CD4-positive, alpha-beta memory T cell (primary cell): ENCODE measurements at regions of chr6 and their contacts with region 1.

Region 1: DNA sequence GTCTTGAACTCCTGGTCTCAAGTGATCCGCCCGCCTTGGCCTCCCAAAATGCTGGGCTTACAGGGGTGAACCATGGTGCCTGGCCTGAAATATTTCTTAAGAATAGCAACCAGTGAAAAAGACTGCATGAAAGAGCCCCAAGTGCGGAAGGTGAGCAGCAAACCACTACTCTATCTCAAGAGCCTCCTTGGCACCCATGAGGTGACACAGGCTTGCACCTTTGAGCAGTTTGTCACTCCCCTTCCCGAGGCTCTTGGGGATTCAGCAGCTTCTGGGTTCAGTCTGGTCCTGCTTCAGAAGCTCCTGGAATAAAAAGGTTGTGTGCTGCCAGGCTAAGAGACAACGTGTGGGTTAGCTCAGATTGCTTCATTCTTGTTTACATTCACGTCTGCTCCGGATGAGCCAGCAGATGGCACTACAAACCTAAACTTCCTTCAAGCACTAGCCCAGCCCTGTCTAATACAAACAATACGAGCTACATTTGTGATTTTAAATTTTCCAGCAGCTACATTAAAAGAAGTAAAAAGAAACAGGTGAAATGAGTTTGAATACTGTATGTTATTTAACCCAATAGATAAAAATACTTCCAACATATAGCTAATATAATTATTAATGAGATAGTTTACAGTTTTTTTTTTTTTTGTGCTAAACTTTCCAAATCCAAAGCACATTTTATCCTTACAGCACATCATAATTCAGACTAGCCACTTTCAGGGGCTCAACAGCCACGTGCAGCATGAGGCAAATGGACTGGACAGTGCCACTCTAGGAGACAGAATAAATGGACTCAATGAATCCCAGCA is 46.2 kb downstream of the GJA10 start:
- DNase-seq: peak; percentile 70 to 78 (median 71)
- H3K4me3 ChIP-seq: no peak overlapping the region
- H3K4me3 Mint-ChIP-seq: no peak overlapping the region
- H3K27ac ChIP-seq: no peak overlapping the region
- H3K27ac Mint-ChIP-seq: peak overlapping the region in 6 of 7 donors; percentile 5 to 67 (median 40)
- H3K4me1 ChIP-seq: peaks cover 7% of the 10 kb centered on the region
- H3K4me1 Mint-ChIP-seq: peaks cover 10 to 30% (median 17%) of the 10 kb centered on the region in 4 donors
- H3K27me3 ChIP-seq: no peaks in the 10 kb centered on the region
- H3K27me3 Mint-ChIP-seq: no peaks in the 10 kb centered on the region

Region 2: DNA sequence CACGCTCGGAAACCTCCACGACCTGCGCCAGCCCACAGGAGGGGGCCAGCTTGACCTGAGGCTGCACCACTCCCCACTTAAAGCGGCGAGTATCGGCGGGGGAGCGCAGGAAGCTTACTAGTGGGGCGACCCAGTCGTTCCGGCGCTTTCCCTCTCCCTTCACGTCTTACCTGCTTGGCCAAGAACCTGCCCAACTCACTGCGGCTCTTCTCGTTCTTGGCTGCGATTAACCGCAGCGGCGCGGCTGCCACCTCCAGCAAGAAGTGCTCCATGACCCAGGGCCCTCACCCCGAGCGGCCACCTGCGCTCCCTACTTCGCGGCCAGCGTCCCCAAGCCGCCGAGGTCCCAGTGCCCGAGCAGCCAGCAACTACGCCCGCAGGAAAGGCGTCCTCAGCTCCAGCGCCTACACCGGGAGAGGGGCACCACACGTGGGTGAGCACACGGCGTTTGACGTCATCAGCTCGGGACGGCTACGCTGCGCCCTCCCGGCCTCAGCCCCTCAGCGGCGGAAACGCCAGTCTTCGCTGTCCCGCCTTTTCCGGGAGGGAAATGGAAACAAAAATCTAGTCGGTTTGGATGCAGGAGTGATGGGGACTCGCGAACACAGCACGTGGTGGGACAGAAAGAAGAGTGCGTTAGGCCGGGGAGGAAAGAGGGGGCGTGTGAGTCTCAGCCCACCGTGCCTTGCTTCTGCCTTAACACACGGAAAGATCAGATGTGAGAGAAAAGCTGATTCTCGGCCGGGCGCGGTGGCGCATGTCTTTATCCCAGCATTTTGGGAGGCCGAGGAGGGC is 120.9 kb before region 1 on chr6 and contains the start of gene MDN1:
- CTCF ChIA-PET with region 1: interaction called, 9 read pairs
- POLR2A ChIA-PET with region 1: interaction called, 7 read pairs
- intact Hi-C with region 1: loop called (anchors 10 kb)
- DNase-seq: peak; percentile 87 to 91 (median 89)
- H3K4me3 ChIP-seq: peak within 1 kb of the TSS; percentile 97
- H3K4me3 Mint-ChIP-seq: peak within 1 kb of the TSS; percentile 92 to 100 (median 96)
- H3K27ac ChIP-seq: peak within 1 kb of the TSS; percentile 62
- H3K27ac Mint-ChIP-seq: peak within 1 kb of the TSS; percentile 91 to 100 (median 96)
- H3K4me1 ChIP-seq: peaks cover 34% of the 10 kb centered on the region
- H3K4me1 Mint-ChIP-seq: peaks cover 21 to 44% (median 31%) of the 10 kb centered on the region in 4 donors
- H3K27me3 ChIP-seq: no peaks in the 10 kb centered on the region
- H3K27me3 Mint-ChIP-seq: no peaks in the 10 kb centered on the region
- total RNA-seq, gene MDN1: 62.0 to 72.2 TPM

Region 3: DNA sequence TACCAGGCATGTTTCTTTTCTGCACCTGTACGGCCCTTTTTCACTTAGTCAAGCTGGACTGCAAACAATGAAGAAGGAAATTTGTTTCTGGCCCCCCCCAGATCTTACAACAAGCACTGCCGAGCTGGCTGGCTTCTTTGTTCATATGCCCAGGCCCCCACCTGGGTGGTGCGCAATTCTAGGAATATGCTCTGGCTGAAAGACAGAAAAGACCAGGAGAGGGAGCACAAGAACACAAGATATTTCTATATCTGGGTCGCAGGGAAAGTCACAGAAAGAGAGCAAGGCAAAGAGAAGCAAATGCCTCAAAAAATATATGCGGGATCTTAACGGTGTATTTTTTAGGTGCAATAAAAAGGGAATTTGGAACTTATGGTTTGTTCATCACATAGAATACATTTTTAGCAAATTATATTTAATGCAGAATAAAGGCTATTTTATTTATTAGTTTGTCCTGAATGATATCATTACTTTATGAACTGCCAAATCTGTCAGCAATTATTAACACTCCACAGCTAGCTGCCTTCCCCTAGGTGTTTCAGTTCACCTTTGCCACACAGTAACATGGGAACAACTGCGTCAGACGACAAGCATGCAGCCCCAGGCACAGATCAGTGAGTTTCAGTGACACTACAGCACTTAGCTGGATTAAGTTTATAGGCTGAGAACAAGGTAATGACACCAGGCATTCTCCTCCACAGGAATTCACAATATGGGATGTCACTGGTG is 30.3 kb after region 1 on chr6:
- CTCF ChIA-PET with region 1: interaction called, 19 read pairs
- POLR2A ChIA-PET with region 1: no interaction called
- intact Hi-C with region 1: no loop called
- DNase-seq: peak in 4 of 5 donors; percentile 23 to 40 (median 33)
- H3K4me3 ChIP-seq: no peak overlapping the region
- H3K4me3 Mint-ChIP-seq: no peak overlapping the region
- H3K27ac ChIP-seq: no peak overlapping the region
- H3K27ac Mint-ChIP-seq: no peak overlapping the region
- H3K4me1 ChIP-seq: no peaks in the 10 kb centered on the region
- H3K4me1 Mint-ChIP-seq: peaks cover 2 to 20% (median 8%) of the 10 kb centered on the region in 4 donors
- H3K27me3 ChIP-seq: no peaks in the 10 kb centered on the region
- H3K27me3 Mint-ChIP-seq: no peaks in the 10 kb centered on the region

Region 4: GRCh38 chr6:90080876-90081481 is 140.6 kb after region 1 on chr6:
- CTCF ChIA-PET with region 1: interaction called, 18 read pairs
- POLR2A ChIA-PET with region 1: interaction called, 5 read pairs
- intact Hi-C with region 1: loop called (anchors 2 kb)
- DNase-seq: peak; percentile 76 to 90 (median 84)
- H3K4me3 ChIP-seq: peak overlapping the region; percentile 24 to 54
- H3K4me3 Mint-ChIP-seq: peak overlapping the region; percentile 80 to 98 (median 96)
- H3K27ac ChIP-seq: peak overlapping the region; percentile 64
- H3K27ac Mint-ChIP-seq: peak overlapping the region; percentile 91 to 99 (median 98)
- H3K4me1 ChIP-seq: peaks cover 75% of the 10 kb centered on the region
- H3K4me1 Mint-ChIP-seq: peaks cover 64 to 94% (median 79%) of the 10 kb centered on the region in 4 donors
- H3K27me3 ChIP-seq: no peaks in the 10 kb centered on the region
- H3K27me3 Mint-ChIP-seq: no peaks in the 10 kb centered on the region

Region 5: DNA sequence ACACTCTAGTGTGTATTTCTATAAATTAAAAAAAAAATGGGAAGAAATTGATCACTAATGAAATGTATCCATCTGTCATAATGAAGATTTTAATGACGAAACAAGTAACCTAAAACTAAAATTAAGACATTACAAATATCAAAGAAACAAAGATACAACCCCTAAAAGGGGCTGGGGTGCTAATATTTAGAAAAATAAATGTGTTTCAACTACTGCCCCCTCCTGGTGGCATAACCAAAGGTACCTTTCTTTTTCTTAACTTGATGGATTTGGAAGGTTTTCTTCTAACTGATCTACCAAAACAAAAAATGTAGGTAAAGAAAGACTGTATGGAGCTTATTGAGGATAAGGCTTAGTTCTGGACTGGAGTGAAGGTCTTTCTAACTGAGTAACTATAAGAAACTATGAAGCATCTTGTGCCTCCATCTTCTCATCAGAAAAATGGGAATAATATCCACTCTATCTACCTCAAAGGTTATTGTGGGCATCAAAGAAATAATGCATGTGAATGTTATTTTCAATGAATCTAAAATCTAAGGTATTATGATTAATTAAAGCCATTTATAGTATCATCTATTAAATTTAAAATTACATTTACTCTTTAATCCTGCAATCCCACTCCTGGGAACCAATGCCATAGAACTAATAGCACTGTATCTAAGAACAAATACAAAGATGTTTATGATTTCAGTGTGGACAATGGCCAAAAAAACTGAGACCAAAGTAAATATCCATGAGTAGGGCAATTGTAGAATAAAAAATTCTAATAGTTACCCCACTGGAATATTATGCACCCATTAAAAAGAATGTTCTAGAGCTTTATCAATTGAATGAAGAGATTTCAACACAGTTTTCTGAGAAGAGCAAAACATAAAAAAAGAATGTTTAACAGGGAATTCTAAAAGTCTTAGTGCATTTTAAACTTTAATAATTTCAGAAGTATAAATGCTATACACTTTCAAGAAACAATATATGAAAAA is 239.1 kb after region 1 on chr6:
- CTCF ChIA-PET with region 1: interaction called, 52 read pairs
- POLR2A ChIA-PET with region 1: interaction called, 3 read pairs
- intact Hi-C with region 1: loop called (anchors 1 kb)
- DNase-seq: peak in 4 of 5 donors; percentile 27 to 36 (median 33)
- H3K4me3 ChIP-seq: no peak overlapping the region
- H3K4me3 Mint-ChIP-seq: no peak overlapping the region
- H3K27ac ChIP-seq: no peak overlapping the region
- H3K27ac Mint-ChIP-seq: peak overlapping the region in 3 of 7 donors; percentile 35 to 72 (median 62)
- H3K4me1 ChIP-seq: peaks cover 46% of the 10 kb centered on the region
- H3K4me1 Mint-ChIP-seq: peaks cover 28 to 75% (median 51%) of the 10 kb centered on the region in 4 donors
- H3K27me3 ChIP-seq: no peaks in the 10 kb centered on the region
- H3K27me3 Mint-ChIP-seq: no peaks in the 10 kb centered on the region

Region 6: DNA sequence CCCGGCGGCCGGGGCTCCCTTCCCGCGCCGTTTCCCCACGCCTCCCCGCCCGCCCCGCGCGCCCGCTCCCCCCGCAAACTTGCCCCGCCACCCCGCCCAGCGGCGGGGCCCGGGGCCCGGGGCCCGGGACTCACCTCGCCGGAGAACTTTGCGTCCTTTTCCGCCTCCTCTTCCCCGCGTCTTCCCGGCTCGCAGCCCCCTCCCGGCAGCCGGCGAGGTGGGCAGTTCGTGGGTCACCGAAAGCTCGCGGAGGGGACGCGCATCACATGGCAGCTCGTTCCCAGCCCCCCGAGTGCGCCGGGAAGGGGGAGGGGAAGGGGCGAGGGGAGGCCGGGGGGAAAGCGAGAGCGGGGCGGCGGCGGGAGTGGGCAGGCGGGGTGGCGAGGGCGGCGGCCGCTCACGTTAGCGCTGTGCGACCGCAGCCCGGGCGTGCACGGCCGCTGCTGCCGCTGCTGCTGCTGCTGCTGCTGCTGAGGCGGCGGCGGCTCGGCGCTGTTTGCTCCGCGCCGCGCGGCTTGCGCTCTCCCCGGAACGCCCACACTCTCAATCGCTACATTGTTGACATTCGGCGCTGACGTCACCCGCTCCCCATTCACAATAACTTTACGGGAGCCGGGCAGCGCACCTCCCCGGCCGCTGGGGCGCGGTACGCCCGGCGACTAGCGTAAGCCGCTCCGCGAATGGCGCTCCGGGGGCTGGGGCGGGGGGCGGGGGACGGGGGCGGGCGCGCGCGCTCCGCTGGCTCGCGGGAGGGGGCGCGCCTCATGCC is 356.1 kb after region 1 on chr6 and contains the start of gene BACH2:
- CTCF ChIA-PET with region 1: interaction called, 46 read pairs
- POLR2A ChIA-PET with region 1: interaction called, 15 read pairs
- intact Hi-C with region 1: loop called (anchors 1 kb)
- DNase-seq: peak; percentile 90 to 96 (median 92)
- H3K4me3 ChIP-seq: peak within 1 kb of the TSS; percentile 43 to 81
- H3K4me3 Mint-ChIP-seq: peak within 1 kb of the TSS; percentile 90 to 96 (median 93)
- H3K27ac ChIP-seq: peak within 1 kb of the TSS; percentile 65
- H3K27ac Mint-ChIP-seq: peak within 1 kb of the TSS; percentile 92 to 99 (median 97)
- H3K4me1 ChIP-seq: peaks cover 40% of the 10 kb centered on the region
- H3K4me1 Mint-ChIP-seq: peaks cover 14 to 40% (median 24%) of the 10 kb centered on the region in 4 donors
- H3K27me3 ChIP-seq: no peaks in the 10 kb centered on the region
- H3K27me3 Mint-ChIP-seq: peaks cover 0 to 4% of the 10 kb centered on the region in 2 donors
- total RNA-seq, gene BACH2: 44.4 to 48.0 TPM

Region 7: DNA sequence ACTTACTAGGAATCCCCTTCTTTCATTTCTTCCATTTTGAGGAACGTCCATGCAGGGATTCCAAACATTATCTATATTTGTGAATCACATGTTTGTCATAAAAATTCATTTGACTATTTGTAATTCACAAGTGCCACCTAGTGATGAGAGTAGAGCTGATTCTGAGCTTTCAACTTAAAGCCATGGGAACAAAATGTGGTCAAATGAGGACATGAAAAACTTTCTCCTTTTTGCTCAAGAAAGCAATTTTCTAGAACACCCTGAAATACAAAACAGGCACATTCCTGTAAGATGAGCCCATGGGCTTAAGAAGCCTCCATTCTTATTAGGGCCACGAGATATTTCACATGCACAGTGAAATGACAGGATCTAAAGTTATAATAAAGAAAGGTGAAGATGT is 634.2 kb after region 1 on chr6:
- CTCF ChIA-PET with region 1: interaction called, 9 read pairs
- POLR2A ChIA-PET with region 1: no interaction called
- intact Hi-C with region 1: loop called (anchors 1 kb)
- DNase-seq: no peak
- H3K4me3 ChIP-seq: no peak overlapping the region
- H3K4me3 Mint-ChIP-seq: no peak overlapping the region
- H3K27ac ChIP-seq: no peak overlapping the region
- H3K27ac Mint-ChIP-seq: peak overlapping the region in 1 of 7 donors; percentile 32
- H3K4me1 ChIP-seq: peaks cover 7% of the 10 kb centered on the region
- H3K4me1 Mint-ChIP-seq: peaks cover 11 to 26% (median 16%) of the 10 kb centered on the region in 4 donors
- H3K27me3 ChIP-seq: no peaks in the 10 kb centered on the region
- H3K27me3 Mint-ChIP-seq: no peaks in the 10 kb centered on the region